Colonic mucosa (tissue), 4 donors: ENCODE measurements at regions of chr7 and their contacts with region 1.

Region 1: GRCh38 chr7:134690016-134690415 is 43.4 kb downstream of the BPGM start:
- DNase-seq: no peak
- H3K4me3 ChIP-seq: no peak overlapping the region
- H3K27ac ChIP-seq: peak overlapping the region; percentile 47
- H3K4me1 ChIP-seq: no peaks in the 10 kb centered on the region
- H3K27me3 ChIP-seq: no peaks in the 10 kb centered on the region
- CTCF ChIP-seq: no peak

Region 2: DNA sequence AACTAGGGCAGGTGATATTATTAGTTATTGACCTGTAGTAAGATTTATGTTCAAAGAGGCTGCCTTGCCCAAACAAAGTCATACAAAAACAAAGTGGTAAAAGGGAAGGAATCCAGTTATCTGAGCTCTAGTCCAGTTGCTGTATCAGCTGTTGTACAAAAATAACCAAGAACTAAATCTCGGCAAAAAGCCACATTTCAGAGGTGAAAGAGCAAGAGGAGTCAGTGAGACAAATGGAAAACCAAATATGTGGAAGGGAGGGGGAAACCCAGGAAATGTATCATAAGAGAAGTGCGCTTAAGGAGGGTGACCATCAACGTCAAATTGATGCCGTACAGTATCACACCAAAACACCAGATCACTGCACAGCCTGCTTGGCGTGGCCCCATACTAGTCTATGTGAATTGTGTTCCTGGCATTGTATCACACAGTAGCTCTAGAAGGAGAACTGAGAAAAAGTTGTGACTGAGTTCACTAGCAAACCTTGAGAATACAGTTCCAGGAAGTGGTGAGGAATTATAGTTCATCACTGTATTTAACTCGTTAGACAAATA is 302.7 kb after region 1 on chr7:
- intact Hi-C with region 1: no loop called
- DNase-seq: no peak
- H3K4me3 ChIP-seq: no peak overlapping the region
- H3K27ac ChIP-seq: peak overlapping the region; percentile 10
- H3K4me1 ChIP-seq: no peaks in the 10 kb centered on the region
- H3K27me3 ChIP-seq: no peaks in the 10 kb centered on the region
- CTCF ChIP-seq: no peak

Region 3: DNA sequence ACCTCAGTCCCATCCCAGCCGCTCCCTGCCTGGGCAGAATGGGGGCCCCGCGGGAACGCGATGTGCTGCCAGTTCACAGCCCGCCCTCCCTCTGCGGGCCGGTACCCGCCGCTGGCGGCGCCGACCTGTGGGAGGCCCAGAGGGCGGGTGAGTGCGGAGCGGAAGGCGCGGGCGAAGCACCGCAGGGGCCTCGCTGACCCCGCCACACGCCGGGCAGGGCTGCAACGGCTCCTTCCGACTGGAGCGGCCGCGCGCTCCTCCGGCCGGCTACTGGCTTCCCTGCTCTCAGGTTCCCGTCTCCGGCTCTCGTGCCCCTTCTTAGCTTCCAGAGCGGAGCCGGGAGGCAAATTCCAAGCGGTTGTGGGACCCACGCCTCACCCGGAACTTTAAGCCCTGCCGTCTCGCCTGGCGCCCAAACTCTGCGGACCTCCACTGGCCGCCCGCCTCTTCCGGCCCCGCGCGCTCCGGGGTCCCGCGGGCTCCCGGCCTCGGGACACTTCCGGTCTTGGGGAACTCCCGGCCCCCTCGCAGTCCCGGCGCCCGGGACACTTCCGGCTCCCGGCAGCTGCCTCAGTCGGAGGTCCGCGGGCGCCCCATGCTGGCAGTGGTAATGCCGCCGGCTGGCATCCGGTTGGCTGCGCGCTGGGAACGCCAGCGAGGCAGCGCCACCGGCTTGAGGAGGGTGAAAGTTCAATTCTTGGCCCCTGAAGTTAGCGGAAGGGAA is 480.4 kb after region 1 on chr7 and contains the start of gene CYREN:
- intact Hi-C with region 1: loop called (anchors 10 kb)
- DNase-seq: peak; percentile 95
- H3K4me3 ChIP-seq: peak within 1 kb of the TSS; percentile 86
- H3K27ac ChIP-seq: peak within 1 kb of the TSS; percentile 100
- H3K4me1 ChIP-seq: peaks cover 6% of the 10 kb centered on the region
- H3K27me3 ChIP-seq: no peaks in the 10 kb centered on the region
- CTCF ChIP-seq: peak; percentile 64
- total RNA-seq, gene CYREN: 34.5 to 37.6 TPM